ENCODE measurements at regions of chr4 and their contacts with region 1.

Region 1: GRCh38 chr4:109532182-109532581 is 27.9 kb upstream of the MCUB start:
- DNase-seq: no peak
- H3K4me3 Mint-ChIP-seq: no peak overlapping the region
- H3K27ac Mint-ChIP-seq: no peak overlapping the region
- H3K4me1 Mint-ChIP-seq: no peaks in the 10 kb centered on the region
- H3K27me3 Mint-ChIP-seq: no peaks in the 10 kb centered on the region

Region 2: GRCh38 chr4:109486007-109486406 is 46.2 kb before region 1 on chr4:
- intact Hi-C with region 1: loop called (anchors 5 kb)
- DNase-seq: no peak
- H3K4me3 Mint-ChIP-seq: no peak overlapping the region
- H3K27ac Mint-ChIP-seq: no peak overlapping the region
- H3K4me1 Mint-ChIP-seq: peaks cover 7% of the 10 kb centered on the region
- H3K27me3 Mint-ChIP-seq: no peaks in the 10 kb centered on the region